ENCODE measurements at regions of chr9 and their contacts with region 1.

Region 1: GRCh38 chr9:16705121-16705604 is 165.3 kb downstream of the BNC2 start:
- DNase-seq: peak; percentile 78
- ATAC-seq: peak; percentile 92
- H3K4me3 ChIP-seq: peak overlapping the region; percentile 37 to 38
- H3K27ac ChIP-seq: peak overlapping the region; percentile 88
- H3K4me1 ChIP-seq: peaks cover 12% of the 10 kb centered on the region
- H3K27me3 ChIP-seq: no peaks in the 10 kb centered on the region
- CTCF ChIP-seq: no peak

Region 2: GRCh38 chr9:16601991-16602390 is 103.2 kb before region 1 on chr9:
- CTCF ChIA-PET with region 1: no interaction called
- POLR2A ChIA-PET with region 1: no interaction called
- in situ Hi-C with region 1: no loop called
- intact Hi-C with region 1: no loop called
- DNase-seq: no peak
- ATAC-seq: no peak
- H3K4me3 ChIP-seq: no peak overlapping the region
- H3K27ac ChIP-seq: no peak overlapping the region
- H3K4me1 ChIP-seq: no peaks in the 10 kb centered on the region
- H3K27me3 ChIP-seq: no peaks in the 10 kb centered on the region
- CTCF ChIP-seq: no peak

Region 3: DNA sequence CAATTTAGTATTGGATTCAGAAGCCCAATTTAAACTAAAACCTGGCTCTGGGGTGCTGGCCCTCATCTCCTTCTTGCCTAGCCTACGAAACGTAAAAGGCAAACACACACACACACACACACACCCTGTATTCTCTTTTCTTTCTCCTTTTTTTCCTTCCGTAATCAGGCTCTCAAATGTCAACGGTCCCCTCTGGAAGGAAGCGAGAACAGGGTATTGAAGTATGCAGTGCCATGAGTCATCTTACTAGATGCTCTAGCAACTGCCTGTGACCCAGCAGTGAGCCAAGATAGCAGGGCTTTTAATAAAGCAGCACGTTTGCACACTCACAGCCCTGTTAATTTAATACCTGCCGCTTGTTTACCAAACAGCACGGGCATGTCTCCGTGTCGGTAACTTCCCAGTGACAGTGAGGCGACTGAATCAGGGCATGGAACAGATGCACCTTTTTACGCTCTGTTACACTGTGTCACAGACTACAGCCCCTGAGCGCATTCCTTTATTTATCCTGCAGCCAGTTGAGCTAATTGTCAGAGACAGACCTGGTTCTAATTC is 78.5 kb before region 1 on chr9:
- CTCF ChIA-PET with region 1: no interaction called
- POLR2A ChIA-PET with region 1: no interaction called
- in situ Hi-C with region 1: no loop called
- intact Hi-C with region 1: loop called (anchors 10 kb)
- DNase-seq: peak; percentile 10
- ATAC-seq: peak; percentile 93
- H3K4me3 ChIP-seq: peak overlapping the region; percentile 15 to 38
- H3K27ac ChIP-seq: peak overlapping the region; percentile 88
- H3K4me1 ChIP-seq: peaks cover 3% of the 10 kb centered on the region
- H3K27me3 ChIP-seq: no peaks in the 10 kb centered on the region
- CTCF ChIP-seq: no peak

Region 4: GRCh38 chr9:16768816-16769215 is 63.7 kb after region 1 on chr9:
- CTCF ChIA-PET with region 1: no interaction called
- POLR2A ChIA-PET with region 1: no interaction called
- in situ Hi-C with region 1: no loop called
- intact Hi-C with region 1: no loop called
- DNase-seq: no peak
- ATAC-seq: no peak
- H3K4me3 ChIP-seq: no peak overlapping the region
- H3K27ac ChIP-seq: no peak overlapping the region
- H3K4me1 ChIP-seq: no peaks in the 10 kb centered on the region
- H3K27me3 ChIP-seq: no peaks in the 10 kb centered on the region
- CTCF ChIP-seq: no peak